ENCODE measurements at regions of chr13 and their contacts with region 1.

Region 1: GRCh38 chr13:78845656-78846365 is 186.9 kb upstream of the OBI1 start:
- DNase-seq: no peak

Region 2: GRCh38 chr13:78700121-78700910 is 145.5 kb before region 1 on chr13:
- intact Hi-C with region 1: no loop called
- DNase-seq: no peak

Region 3: GRCh38 chr13:78806457-78806856 is 39.4 kb before region 1 on chr13:
- intact Hi-C with region 1: loop called in 1 of 2 experiments (anchors 2 kb)
- DNase-seq: no peak

Region 4: DNA sequence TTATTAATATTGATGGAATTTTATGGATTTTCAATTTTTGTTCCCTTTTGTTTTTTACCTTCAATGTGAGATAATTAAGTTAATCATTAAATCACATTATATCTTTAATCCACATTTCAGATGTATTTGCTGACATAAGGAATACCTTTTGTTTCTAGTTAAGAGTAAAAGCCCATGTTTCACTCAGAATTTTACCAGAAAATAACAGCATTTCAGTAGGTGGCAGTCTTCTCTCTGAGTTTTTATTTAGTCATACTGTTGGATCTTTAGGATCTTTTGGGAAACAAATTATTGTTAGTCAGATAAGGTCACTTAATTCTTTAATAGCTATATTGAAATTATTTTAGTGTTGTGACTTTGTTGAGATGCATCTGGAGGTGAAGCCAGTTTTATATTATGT is 703.1 kb after region 1 on chr13:
- intact Hi-C with region 1: no loop called
- DNase-seq: no peak